ENCODE measurements at regions of chr9 and their contacts with region 1.

Region 1: DNA sequence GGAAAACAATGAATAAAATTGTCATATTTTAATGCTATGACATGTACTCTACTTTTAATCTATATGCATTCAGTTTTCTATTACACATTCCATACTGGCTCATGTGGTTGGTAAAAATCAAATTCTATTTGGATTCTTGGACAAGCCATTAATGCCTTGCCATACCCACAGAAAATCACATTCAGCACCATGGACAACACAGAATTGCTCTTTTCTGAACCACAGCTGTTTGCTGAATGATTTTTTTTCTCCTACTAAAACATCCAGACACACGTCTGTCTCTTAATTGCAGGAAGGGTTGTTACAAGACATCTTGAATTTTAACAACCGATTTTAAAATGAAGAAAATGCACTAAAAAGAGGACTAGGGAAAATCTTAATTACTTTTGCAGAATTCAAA is 675.6 kb downstream of the BRINP1 start:
- DNase-seq: no peak
- H3K4me3 ChIP-seq: no peak overlapping the region
- H3K27ac ChIP-seq: no peak overlapping the region
- H3K4me1 ChIP-seq: no peaks in the 10 kb centered on the region
- H3K27me3 ChIP-seq: no peaks in the 10 kb centered on the region
- CTCF ChIP-seq: no peak
- POLR2A ChIP-seq: no peak

Region 2: DNA sequence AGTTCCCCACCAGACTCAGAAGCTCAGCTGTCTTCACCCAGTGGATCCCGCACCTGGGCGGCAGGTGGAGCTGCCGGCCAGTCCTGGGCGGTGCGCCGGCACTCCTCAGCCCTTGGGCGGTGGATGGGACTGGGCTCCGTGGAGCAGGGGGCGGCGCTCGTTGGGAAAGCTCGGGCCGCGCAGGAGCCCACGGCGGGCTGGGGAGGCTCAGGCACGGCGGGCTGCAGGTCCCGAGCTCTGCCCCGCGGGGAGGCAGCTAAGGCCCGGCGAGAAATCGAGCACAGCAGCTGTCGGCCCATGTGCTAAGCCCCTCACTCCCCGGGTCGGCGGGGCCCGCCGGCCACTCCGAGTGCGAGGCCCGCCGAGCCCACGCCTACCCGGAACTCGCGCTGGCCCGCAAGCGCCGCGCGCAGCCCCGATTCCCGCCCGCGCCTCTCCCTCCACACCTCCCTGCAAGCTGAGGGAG is 115.5 kb after region 1 on chr9:
- intact Hi-C with region 1: loop called (anchors 5 kb)
- DNase-seq: no peak
- H3K4me3 ChIP-seq: no peak overlapping the region
- H3K27ac ChIP-seq: no peak overlapping the region
- H3K4me1 ChIP-seq: no peaks in the 10 kb centered on the region
- H3K27me3 ChIP-seq: no peaks in the 10 kb centered on the region
- CTCF ChIP-seq: no peak
- POLR2A ChIP-seq: no peak

Measured in uterus (tissue), 4 donors.